ENCODE measurements at regions of chr17 and their contacts with region 1.

Region 1: DNA sequence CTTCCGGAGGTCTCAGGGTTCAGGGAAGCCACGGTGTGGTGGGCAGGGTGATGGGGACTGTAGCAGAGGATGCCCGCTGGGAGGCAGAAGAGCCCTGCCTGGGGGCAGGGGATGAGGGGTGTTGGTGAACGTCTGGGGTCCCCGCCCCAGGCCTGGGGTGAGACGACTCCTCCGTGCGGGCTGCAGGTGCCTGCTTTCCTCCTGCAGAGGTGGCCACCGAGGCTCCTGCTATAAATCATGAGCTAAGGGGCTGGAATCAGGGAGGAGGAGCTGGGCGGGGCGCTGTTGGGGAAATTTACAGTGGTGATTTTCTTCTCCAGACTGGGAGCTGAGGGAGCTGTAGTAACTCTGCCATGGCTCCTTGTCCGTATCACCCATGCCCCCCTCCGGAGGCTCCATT is 167.0 kb downstream of the MRM1 start:
- DNase-seq: peak; percentile 48
- ATAC-seq: peak; percentile 77
- H3K4me3 Mint-ChIP-seq: no peak overlapping the region
- H3K27ac Mint-ChIP-seq: no peak overlapping the region
- H3K4me1 Mint-ChIP-seq: peaks cover 43% of the 10 kb centered on the region
- H3K27me3 Mint-ChIP-seq: peaks cover 18% of the 10 kb centered on the region
- CTCF ChIP-seq: no peak

Region 2: GRCh38 chr17:36742267-36743000 is 26.0 kb before region 1 on chr17:
- CTCF ChIA-PET with region 1: no interaction called
- POLR2A ChIA-PET with region 1: no interaction called
- DNase-seq: peak; percentile 45
- ATAC-seq: peak; percentile 63
- H3K4me3 Mint-ChIP-seq: no peak overlapping the region
- H3K27ac Mint-ChIP-seq: peak overlapping the region; percentile 2; the same call in 1 of the 2 replicates
- H3K4me1 Mint-ChIP-seq: peaks cover 19% of the 10 kb centered on the region
- H3K27me3 Mint-ChIP-seq: no peaks in the 10 kb centered on the region
- CTCF ChIP-seq: no peak

Region 3: GRCh38 chr17:36844013-36844412 is 75.6 kb after region 1 on chr17:
- CTCF ChIA-PET with region 1: no interaction called
- POLR2A ChIA-PET with region 1: interaction called, 10 read pairs
- DNase-seq: no peak
- ATAC-seq: no peak
- H3K4me3 Mint-ChIP-seq: no peak overlapping the region
- H3K27ac Mint-ChIP-seq: no peak overlapping the region
- H3K4me1 Mint-ChIP-seq: peaks cover 21% of the 10 kb centered on the region
- H3K27me3 Mint-ChIP-seq: peaks cover 36% of the 10 kb centered on the region
- CTCF ChIP-seq: no peak

Region 4: DNA sequence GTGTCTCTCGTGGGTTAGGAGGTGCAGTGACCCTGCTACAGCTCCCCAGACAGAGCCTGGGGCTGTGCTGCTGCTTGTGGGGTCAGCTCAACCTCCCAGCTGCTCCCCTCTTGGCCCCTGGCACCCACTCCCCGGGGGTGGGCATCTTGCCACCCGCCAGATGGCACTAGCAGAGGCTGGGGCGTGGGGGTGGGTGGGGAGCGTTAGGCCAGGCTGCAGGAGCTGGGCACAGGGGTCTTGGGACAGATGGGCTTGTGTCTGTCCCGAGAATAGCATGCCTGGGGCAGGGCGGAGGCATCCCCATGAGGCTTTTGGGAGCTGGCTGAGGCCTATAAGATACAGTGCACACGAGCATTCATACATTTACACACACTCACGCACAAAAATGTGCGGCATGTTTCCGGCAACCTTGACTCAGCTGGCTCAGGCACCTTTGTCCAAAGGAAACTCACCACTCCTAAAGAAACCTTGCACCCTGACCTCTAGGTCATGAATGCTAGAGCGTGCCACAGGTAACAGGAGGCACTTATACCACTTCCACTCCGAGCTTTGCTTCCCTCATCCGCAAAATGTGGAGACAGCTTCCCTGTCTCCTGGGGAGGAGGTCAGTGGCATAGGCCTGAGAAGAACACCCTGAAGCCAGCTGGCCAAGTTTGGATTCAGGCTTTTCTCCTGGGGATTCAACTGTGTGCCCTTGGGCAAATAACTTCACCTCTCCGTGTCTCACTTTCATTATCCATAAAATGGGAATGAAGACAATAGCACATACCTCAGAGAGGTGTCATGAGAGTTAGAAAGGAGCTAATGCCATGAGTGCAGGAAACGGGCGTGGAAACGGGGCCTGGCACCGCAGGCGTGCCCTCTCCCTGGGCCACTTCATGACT is 90.0 kb after region 1 on chr17:
- CTCF ChIA-PET with region 1: no interaction called
- POLR2A ChIA-PET with region 1: no interaction called
- DNase-seq: no peak
- ATAC-seq: no peak
- H3K4me3 Mint-ChIP-seq: no peak overlapping the region
- H3K27ac Mint-ChIP-seq: no peak overlapping the region
- H3K4me1 Mint-ChIP-seq: peaks cover 12% of the 10 kb centered on the region
- H3K27me3 Mint-ChIP-seq: no peaks in the 10 kb centered on the region
- CTCF ChIP-seq: no peak

Region 5: DNA sequence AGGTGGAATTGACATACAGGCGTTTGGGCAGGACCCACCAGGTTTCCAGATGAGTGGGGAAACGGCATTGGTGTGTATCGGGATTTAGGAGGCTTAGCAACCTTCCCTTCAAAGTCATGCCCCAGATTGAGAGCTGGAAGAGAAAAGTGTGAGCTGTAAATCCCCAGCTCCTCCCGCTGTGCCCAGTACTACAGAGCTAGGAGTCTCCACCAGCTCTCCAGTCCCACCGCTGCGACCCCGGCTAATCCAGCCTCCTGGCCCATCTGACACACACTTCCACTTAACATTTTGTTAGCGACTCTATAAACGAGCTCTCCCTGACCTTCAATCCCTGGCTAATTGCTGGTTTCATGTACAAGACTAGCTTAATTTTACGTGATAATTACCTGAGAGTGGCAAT is 139.0 kb after region 1 on chr17:
- CTCF ChIA-PET with region 1: no interaction called
- POLR2A ChIA-PET with region 1: no interaction called
- DNase-seq: no peak
- ATAC-seq: no peak
- H3K4me3 Mint-ChIP-seq: no peak overlapping the region
- H3K27ac Mint-ChIP-seq: no peak overlapping the region
- H3K4me1 Mint-ChIP-seq: no peaks in the 10 kb centered on the region
- H3K27me3 Mint-ChIP-seq: 0 out of 2 replicates have a peak, but pooled peaks cover 3% of the 10 kb centered on the region
- CTCF ChIP-seq: no peak